Naive thymus-derived CD4-positive, alpha-beta T cell (primary cell): ENCODE measurements at regions of chr14 and their contacts with region 1.

Region 1: GRCh38 chr14:54509546-54510501 is at the start of gene CGRRF1:
- DNase-seq: peak; percentile 86 to 98 (median 89)
- ATAC-seq: peak; percentile 99
- H3K4me3 ChIP-seq: peak within 1 kb of the TSS; percentile 93
- H3K4me3 Mint-ChIP-seq: peak within 1 kb of the TSS; percentile 87 to 99 (median 96)
- H3K27ac ChIP-seq: peak within 1 kb of the TSS; percentile 72
- H3K27ac Mint-ChIP-seq: peak within 1 kb of the TSS; percentile 85 to 93 (median 89)
- H3K4me1 ChIP-seq: peaks cover 11% of the 10 kb centered on the region in 2 donors
- H3K4me1 Mint-ChIP-seq: peaks cover 20 to 56% (median 53%) of the 10 kb centered on the region in 7 donors
- H3K27me3 ChIP-seq: no peaks in the 10 kb centered on the region
- H3K27me3 Mint-ChIP-seq: peaks cover 0 to 10% (median 0%) of the 10 kb centered on the region in 5 donors
- total RNA-seq, gene CGRRF1: 11.2 to 24.1 (median 17.3) TPM

Region 2: DNA sequence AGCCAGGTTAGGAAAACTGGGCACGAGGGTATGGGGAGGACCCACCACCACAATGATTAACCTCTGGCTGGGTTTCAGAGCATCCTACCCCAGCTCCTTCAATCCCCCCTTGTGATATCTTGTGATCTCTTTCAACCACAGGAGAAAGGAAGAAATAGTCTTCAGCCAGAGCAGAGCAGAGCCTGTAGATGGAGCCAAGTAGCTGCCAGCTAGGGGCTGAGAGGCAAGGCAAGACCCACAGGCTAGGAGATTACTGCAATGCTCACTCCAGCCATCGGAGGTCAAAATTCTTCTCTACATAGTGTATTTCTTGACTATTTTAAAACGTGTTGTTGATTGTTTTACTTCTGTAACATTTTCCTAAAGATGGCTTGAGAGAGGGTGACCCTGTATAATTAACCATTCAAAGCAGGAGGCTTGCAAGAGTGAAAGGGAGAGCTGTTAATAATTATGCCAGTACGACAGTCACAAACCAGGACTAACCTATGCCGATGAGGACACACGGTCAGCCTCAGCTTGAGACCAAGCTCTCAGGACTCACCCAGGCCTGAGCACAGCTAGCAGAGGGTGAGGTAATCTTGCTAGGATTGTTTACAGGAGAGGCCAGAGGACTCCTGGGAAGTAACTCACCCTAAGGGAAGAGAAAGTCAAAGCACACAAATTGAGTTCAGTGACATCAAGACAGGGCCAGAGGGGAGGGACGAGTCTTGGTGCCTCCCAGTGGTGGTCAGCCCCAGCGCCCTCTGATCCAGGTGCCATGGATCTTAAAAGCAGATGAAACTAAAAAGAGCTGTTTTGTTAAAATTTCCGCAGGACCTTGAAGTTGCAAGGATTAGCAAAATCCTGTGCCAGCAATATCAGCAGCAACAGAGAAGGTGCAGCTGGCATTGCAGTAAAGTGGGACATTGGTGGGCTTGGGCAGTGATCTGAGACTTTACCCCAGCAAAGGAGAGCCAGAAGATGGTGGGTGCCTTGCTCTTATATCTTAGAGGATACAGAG is 142.8 kb before region 1 on chr14:
- CTCF ChIA-PET with region 1: no interaction called
- POLR2A ChIA-PET with region 1: no interaction called
- intact Hi-C with region 1: loop called in 1 of 2 experiments (anchors 1 kb)
- DNase-seq: peak in 6 of 9 donors; percentile 13 to 46 (median 28)
- ATAC-seq: peak; percentile 83
- H3K4me3 ChIP-seq: no peak overlapping the region
- H3K4me3 Mint-ChIP-seq: no peak overlapping the region
- H3K27ac ChIP-seq: no peak overlapping the region
- H3K27ac Mint-ChIP-seq: no peak overlapping the region
- H3K4me1 ChIP-seq: no peaks in the 10 kb centered on the region
- H3K4me1 Mint-ChIP-seq: peaks cover 0 to 1% (median 0%) of the 10 kb centered on the region in 7 donors
- H3K27me3 ChIP-seq: no peaks in the 10 kb centered on the region
- H3K27me3 Mint-ChIP-seq: peaks cover 0 to 29% (median 15%) of the 10 kb centered on the region in 5 donors

Region 3: GRCh38 chr14:54440873-54441868 is 68.7 kb before region 1 on chr14 and contains the start of gene CNIH1:
- CTCF ChIA-PET with region 1: no interaction called
- POLR2A ChIA-PET with region 1: interaction called, 3 read pairs
- intact Hi-C with region 1: loop called (anchors 1 kb)
- DNase-seq: peak; percentile 85 to 99 (median 93)
- ATAC-seq: peak; percentile 97
- H3K4me3 ChIP-seq: peak within 1 kb of the TSS; percentile 73
- H3K4me3 Mint-ChIP-seq: peak within 1 kb of the TSS; percentile 85 to 97 (median 94)
- H3K27ac ChIP-seq: peak within 1 kb of the TSS; percentile 80
- H3K27ac Mint-ChIP-seq: peak within 1 kb of the TSS; percentile 87 to 98 (median 95)
- H3K4me1 ChIP-seq: peaks cover 9 to 23% of the 10 kb centered on the region in 2 donors
- H3K4me1 Mint-ChIP-seq: peaks cover 23 to 54% (median 49%) of the 10 kb centered on the region in 7 donors
- H3K27me3 ChIP-seq: no peaks in the 10 kb centered on the region
- H3K27me3 Mint-ChIP-seq: peaks cover 0 to 2% (median 0%) of the 10 kb centered on the region in 5 donors
- total RNA-seq, gene CNIH1: 50.5 to 87.9 (median 57.8) TPM

Region 4: GRCh38 chr14:54488646-54489317 is 21.0 kb before region 1 on chr14 and contains the start of gene GMFB:
- CTCF ChIA-PET with region 1: interaction called, 8 read pairs
- POLR2A ChIA-PET with region 1: interaction called, 29 read pairs
- intact Hi-C with region 1: loop called (anchors 1 kb)
- DNase-seq: peak; percentile 72 to 88 (median 84)
- ATAC-seq: peak; percentile 97
- H3K4me3 ChIP-seq: peak within 1 kb of the TSS; percentile 65
- H3K4me3 Mint-ChIP-seq: peak within 1 kb of the TSS; percentile 80 to 96 (median 92)
- H3K27ac ChIP-seq: peak within 1 kb of the TSS; percentile 86
- H3K27ac Mint-ChIP-seq: peak within 1 kb of the TSS; percentile 77 to 99 (median 97)
- H3K4me1 ChIP-seq: peaks cover 17 to 18% of the 10 kb centered on the region in 2 donors
- H3K4me1 Mint-ChIP-seq: peaks cover 42 to 69% (median 63%) of the 10 kb centered on the region in 7 donors
- H3K27me3 ChIP-seq: no peaks in the 10 kb centered on the region
- H3K27me3 Mint-ChIP-seq: peaks cover 0 to 3% (median 0%) of the 10 kb centered on the region in 5 donors
- total RNA-seq, gene GMFB: 28.9 to 39.9 (median 34.7) TPM

Region 5: GRCh38 chr14:55191203-55192053 is 681.6 kb after region 1 on chr14 and contains the start of gene DLGAP5:
- CTCF ChIA-PET with region 1: no interaction called
- POLR2A ChIA-PET with region 1: no interaction called
- intact Hi-C with region 1: loop called in 1 of 2 experiments (anchors 1 kb)
- DNase-seq: peak; percentile 59 to 90 (median 86)
- ATAC-seq: peak; percentile 98
- H3K4me3 ChIP-seq: peak within 1 kb of the TSS; percentile 84
- H3K4me3 Mint-ChIP-seq: peak within 1 kb of the TSS; percentile 88 to 97 (median 90)
- H3K27ac ChIP-seq: peak within 1 kb of the TSS; percentile 58
- H3K27ac Mint-ChIP-seq: peak within 1 kb of the TSS; percentile 46 to 92 (median 68)
- H3K4me1 ChIP-seq: peaks cover 7 to 10% of the 10 kb centered on the region in 2 donors
- H3K4me1 Mint-ChIP-seq: peaks cover 5 to 42% (median 18%) of the 10 kb centered on the region in 7 donors
- H3K27me3 ChIP-seq: no peaks in the 10 kb centered on the region
- H3K27me3 Mint-ChIP-seq: peaks cover 0 to 4% (median 0%) of the 10 kb centered on the region in 5 donors
- total RNA-seq, gene DLGAP5: 0.49 to 46.7 TPM in 2 of 5 experiments, not detected in the others

Region 6: GRCh38 chr14:55411426-55412389 is 901.9 kb after region 1 on chr14 and contains the start of gene ATG14:
- CTCF ChIA-PET with region 1: no interaction called
- POLR2A ChIA-PET with region 1: no interaction called
- intact Hi-C with region 1: loop called in 1 of 2 experiments (anchors 10 kb)
- DNase-seq: peak; percentile 48 to 78 (median 66)
- ATAC-seq: peak; percentile 98
- H3K4me3 ChIP-seq: peak within 1 kb of the TSS; percentile 68
- H3K4me3 Mint-ChIP-seq: peak within 1 kb of the TSS; percentile 68 to 94 (median 92)
- H3K27ac ChIP-seq: peak within 1 kb of the TSS; percentile 86
- H3K27ac Mint-ChIP-seq: peak within 1 kb of the TSS; percentile 86 to 95 (median 90)
- H3K4me1 ChIP-seq: peaks cover 11 to 16% of the 10 kb centered on the region in 2 donors
- H3K4me1 Mint-ChIP-seq: peaks cover 26 to 56% (median 39%) of the 10 kb centered on the region in 7 donors
- H3K27me3 ChIP-seq: no peaks in the 10 kb centered on the region
- H3K27me3 Mint-ChIP-seq: peaks cover 0 to 5% (median 0%) of the 10 kb centered on the region in 5 donors
- total RNA-seq, gene ATG14: 7.8 to 19.6 (median 18.8) TPM